ENCODE measurements at regions of chr1 and their contacts with region 1.

Region 1: DNA sequence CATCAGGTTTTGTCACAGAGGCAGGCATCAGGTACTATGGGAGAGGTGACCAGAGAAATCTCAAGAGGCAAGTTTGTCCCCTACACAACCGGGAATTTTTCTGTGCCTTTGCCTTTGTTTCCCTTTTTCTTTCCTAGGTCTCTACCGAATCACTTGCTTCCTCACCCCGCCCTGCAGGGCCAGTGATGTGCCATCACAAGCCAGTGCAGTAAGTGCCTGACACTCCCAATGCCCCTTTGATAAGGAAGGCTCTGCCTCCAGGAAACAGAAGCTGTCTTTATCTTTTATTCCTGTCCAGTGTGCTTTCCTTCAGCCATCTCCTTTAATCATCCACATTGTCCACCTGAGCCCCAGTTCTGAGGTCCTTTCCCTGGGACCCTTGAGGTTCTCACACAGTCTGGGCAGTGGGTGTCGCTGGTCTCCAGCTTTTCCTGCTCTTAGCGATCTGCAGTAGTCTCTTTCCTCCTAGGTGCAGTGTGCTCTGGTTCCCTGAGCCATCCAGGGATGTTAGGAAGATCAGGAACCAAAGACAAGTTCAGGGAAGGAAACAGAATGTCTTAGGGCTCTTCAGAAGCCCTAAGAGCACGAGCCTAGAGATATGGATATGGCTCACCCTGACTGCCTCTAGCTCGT is 36.6 kb downstream of the GJA5 start:
- DNase-seq: no peak

Region 2: GRCh38 chr1:147821883-147822282 is 98.1 kb after region 1 on chr1:
- intact Hi-C with region 1: no loop called
- DNase-seq: no peak

Region 3: DNA sequence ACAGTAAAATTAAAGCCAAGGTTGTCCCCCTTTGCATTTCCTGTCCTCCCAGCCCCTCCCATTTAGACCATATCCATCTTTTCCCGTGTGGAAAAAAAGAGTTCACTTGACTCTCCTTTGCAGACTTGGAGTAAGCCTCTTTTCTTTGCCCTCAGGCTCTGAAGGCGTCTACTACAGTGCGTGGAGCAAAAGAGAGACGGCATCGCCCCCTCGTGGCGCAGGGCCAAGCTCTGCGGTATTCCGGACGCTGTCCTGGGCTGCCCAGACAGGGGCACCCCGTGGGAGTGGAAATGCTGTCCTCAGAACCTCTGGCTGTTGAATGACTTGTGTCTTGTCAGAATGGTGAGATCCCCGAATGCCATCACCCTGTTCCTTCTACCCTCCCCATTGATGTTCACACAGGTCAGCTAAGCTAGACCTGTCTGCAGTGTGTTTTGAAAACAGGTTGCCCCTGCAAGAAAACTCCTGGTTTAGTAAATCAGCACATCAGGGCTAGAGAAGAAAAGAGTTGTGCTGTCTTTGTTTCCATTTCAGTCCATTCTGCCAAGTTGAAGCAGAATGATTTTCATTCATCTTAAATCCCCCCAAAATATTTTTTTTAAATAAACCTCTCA is 166.5 kb after region 1 on chr1:
- intact Hi-C with region 1: loop called (anchors 5 kb)
- DNase-seq: peak; percentile 85

Measured in posterior vena cava (tissue), 2 donors.